Activated naive CD4-positive, alpha-beta T cell treated with anti-CD3 and anti-CD28 coated beads for 36 hours (primary cell): ENCODE measurements at regions of chr2 and their contacts with region 1.

Region 1: DNA sequence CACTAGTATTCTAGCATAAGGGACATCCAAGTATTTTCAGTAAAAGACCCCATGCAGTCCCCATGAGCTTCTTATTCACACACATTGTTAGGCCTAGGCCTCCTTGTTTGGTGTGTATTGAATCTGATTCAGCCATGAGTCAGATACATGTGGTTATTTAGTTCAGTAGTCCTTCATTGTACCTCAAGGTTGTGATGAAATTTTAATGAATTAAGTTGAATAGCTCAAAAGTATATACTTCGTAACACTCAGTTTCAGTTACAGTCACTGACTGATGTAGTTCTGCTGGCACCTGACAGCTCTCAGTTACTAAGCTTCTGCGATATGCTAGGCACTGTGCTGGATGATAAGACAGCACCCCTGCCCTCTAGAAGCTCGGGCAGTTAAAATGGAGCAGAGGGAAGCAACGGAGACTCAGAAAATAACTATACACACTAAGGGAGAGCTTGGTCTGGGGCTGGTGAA is 86.4 kb downstream of the XRCC5 start:
- DNase-seq: peak; percentile 61
- H3K4me3 Mint-ChIP-seq: no peak overlapping the region
- H3K27ac Mint-ChIP-seq: peak overlapping the region; percentile 80
- H3K4me1 Mint-ChIP-seq: peaks cover 54% of the 10 kb centered on the region
- H3K27me3 Mint-ChIP-seq: no peaks in the 10 kb centered on the region

Region 2: DNA sequence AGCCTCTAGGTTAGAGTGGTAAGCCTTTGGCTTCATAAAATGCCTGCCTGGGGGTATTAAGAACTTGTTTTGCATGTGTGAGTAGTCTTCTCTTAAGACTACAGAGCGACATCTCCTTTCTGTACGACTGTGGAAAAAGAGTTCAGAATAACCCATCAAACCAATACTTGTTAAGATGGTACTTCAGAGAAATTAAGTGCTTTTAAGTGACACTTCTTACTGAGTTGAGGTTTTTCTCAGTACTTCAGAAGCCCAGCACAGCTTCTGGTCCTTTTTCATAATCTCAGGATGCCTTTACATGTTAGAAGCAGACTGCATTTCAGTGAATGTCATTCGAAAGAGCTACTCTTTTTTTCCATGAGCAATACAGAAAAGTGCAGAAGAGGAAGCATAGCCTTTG is 75.6 kb before region 1 on chr2:
- CTCF ChIA-PET with region 1: interaction called, 3 read pairs
- intact Hi-C with region 1: loop called (anchors 1 kb)
- DNase-seq: peak; percentile 31
- H3K4me3 Mint-ChIP-seq: peak overlapping the region; percentile 33
- H3K27ac Mint-ChIP-seq: peak overlapping the region; percentile 95
- H3K4me1 Mint-ChIP-seq: peaks cover 79% of the 10 kb centered on the region
- H3K27me3 Mint-ChIP-seq: no peaks in the 10 kb centered on the region

Region 3: DNA sequence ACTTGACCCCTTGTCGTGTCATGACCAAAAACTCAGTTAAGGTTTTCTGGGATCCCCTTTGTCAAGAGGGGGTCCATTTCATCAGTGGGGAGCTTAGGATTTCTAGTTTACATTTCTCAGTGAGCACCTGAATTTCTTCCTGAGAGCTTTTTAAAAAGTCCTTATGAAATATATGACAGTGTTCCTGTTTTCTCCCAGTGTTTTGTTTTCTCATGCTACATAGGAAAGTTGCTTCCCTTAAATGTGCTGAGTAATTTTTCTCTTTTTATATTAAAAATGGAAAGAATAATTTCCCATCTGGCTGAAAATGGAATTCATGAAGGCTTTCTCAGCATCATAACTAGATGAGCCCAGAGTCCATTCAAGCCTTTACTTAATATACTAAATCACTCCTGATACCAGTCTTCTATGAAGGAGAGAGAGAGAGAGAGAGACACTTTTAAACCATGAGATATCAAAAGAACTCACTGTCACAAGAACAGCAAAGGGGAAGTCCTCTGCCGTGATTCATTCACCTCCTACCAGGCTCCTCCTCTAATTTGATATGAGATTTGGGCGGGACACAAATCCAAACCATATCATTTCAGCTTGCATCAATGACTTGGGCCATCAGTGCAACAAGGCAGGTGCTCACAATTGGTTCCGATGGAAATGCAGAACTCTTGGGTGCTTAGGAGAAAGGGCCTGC is 25.4 kb before region 1 on chr2:
- CTCF ChIA-PET with region 1: interaction called, 5 read pairs
- intact Hi-C with region 1: loop called (anchors 1 kb)
- DNase-seq: peak; percentile 45
- H3K4me3 Mint-ChIP-seq: no peak overlapping the region
- H3K27ac Mint-ChIP-seq: no peak overlapping the region
- H3K4me1 Mint-ChIP-seq: peaks cover 64% of the 10 kb centered on the region
- H3K27me3 Mint-ChIP-seq: no peaks in the 10 kb centered on the region

Region 4: GRCh38 chr2:216222650-216223352 is 27.2 kb after region 1 on chr2:
- CTCF ChIA-PET with region 1: interaction called, 3 read pairs
- intact Hi-C with region 1: loop called (anchors 1 kb)
- DNase-seq: peak; percentile 56
- H3K4me3 Mint-ChIP-seq: no peak overlapping the region
- H3K27ac Mint-ChIP-seq: peak overlapping the region; percentile 41
- H3K4me1 Mint-ChIP-seq: peaks cover 28% of the 10 kb centered on the region
- H3K27me3 Mint-ChIP-seq: no peaks in the 10 kb centered on the region

Region 5: DNA sequence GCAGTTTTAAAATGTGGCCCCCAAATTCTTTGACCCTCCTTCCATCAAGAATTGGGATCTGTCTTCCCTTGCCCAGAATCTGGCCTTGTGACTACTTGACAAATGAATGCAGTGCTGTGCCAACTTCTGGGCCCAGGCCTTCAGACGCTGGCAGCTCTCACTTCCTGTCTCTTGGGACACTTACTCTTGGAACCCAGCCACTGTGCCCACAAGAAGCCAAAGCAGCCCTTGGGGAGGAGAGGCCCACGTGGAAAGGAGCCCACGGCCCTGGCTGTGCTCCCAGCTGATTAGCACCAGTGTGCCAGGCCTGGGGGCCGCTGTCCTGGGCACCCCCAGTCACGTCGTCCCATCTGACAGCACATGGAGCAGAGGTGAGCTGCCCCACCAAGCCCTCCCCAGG is 359.7 kb after region 1 on chr2:
- CTCF ChIA-PET with region 1: no interaction called
- intact Hi-C with region 1: no loop called
- DNase-seq: no peak
- H3K4me3 Mint-ChIP-seq: no peak overlapping the region
- H3K27ac Mint-ChIP-seq: no peak overlapping the region
- H3K4me1 Mint-ChIP-seq: no peaks in the 10 kb centered on the region
- H3K27me3 Mint-ChIP-seq: no peaks in the 10 kb centered on the region